Aorta (tissue), 5 donors: ENCODE measurements at regions of chr10 and their contacts with region 1.

Region 1: GRCh38 chr10:87659571-87660483 is at the start of gene PAPSS2:
- DNase-seq: peak; percentile 87 to 89
- ATAC-seq: peak; percentile 78
- H3K4me3 ChIP-seq: peak within 1 kb of the TSS; percentile 40 to 76
- H3K27ac ChIP-seq: no peak within 1 kb of the TSS
- H3K4me1 ChIP-seq: no peaks in the 10 kb centered on the region
- H3K27me3 ChIP-seq: no peaks in the 10 kb centered on the region
- total RNA-seq, gene PAPSS2: 42.9 to 57.2 TPM

Region 2: DNA sequence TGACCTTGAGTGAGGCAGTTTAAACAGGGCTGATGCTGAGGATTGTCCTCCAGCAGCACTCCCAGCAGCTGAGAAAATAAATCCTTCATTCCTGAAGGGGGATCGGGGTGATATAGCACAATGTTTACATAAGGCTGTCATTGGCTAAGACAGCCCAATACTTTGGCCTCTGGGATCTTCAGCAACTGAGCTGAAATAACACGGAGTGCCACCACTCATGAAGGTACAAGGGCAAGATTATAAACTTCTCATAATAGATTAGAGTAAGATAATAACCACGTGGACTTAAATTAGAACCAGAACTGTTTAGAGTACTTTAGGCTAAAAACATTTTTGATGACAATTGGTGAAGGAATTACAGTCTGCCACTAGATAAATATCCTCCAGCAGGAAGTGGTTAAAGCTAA is 70.2 kb before region 1 on chr10:
- intact Hi-C with region 1: no loop called
- DNase-seq: no peak
- ATAC-seq: no peak
- H3K4me3 ChIP-seq: no peak overlapping the region
- H3K27ac ChIP-seq: no peak overlapping the region
- H3K4me1 ChIP-seq: no peaks in the 10 kb centered on the region
- H3K27me3 ChIP-seq: no peaks in the 10 kb centered on the region

Region 3: GRCh38 chr10:87691506-87692070 is 31.8 kb after region 1 on chr10:
- intact Hi-C with region 1: no loop called
- DNase-seq: no peak
- ATAC-seq: no peak
- H3K4me3 ChIP-seq: no peak overlapping the region
- H3K27ac ChIP-seq: no peak overlapping the region
- H3K4me1 ChIP-seq: no peaks in the 10 kb centered on the region
- H3K27me3 ChIP-seq: no peaks in the 10 kb centered on the region

Region 4: DNA sequence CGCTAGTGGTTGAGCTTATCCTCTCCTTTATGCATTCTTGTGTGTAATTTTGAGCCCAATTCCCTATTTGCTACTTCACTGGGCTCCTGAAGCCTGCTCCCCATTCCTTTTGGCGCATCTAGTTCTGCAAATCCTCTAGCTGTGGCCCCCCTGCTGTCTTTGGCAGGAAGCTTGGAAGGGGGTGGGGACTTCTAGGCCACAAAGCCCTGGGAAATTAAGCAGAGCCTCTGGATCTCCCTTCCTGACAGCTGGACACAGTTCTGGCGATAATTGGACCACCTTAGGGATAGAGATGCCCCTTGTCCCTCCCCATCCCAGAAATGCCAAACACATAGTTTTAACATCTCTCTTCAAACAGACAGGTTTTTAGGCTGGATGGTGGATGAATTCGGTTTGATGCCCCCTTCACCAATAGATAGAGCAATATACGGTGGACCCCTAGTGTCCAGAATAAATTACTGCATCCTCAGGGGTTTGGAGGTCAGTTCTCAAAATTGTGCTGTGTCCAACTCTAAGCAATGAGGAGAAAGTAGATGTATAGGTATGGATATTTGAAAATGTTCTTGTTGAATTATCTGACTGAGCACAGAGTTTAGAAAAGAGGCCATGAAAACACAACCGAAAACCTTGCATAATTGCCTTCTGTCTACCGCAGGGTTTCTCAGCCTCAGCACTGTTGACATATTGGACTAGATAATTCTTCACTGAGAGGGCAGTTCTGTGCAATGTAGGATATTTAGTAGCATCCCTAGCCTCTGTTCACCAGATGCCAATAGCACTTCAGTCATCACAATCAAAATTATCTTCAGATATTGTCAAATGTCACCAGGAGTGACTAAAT is 75.4 kb after region 1 on chr10:
- intact Hi-C with region 1: loop called (anchors 2 to 5 kb)
- DNase-seq: no peak
- ATAC-seq: peak; percentile 85
- H3K4me3 ChIP-seq: no peak overlapping the region
- H3K27ac ChIP-seq: no peak overlapping the region
- H3K4me1 ChIP-seq: no peaks in the 10 kb centered on the region
- H3K27me3 ChIP-seq: no peaks in the 10 kb centered on the region

Region 5: DNA sequence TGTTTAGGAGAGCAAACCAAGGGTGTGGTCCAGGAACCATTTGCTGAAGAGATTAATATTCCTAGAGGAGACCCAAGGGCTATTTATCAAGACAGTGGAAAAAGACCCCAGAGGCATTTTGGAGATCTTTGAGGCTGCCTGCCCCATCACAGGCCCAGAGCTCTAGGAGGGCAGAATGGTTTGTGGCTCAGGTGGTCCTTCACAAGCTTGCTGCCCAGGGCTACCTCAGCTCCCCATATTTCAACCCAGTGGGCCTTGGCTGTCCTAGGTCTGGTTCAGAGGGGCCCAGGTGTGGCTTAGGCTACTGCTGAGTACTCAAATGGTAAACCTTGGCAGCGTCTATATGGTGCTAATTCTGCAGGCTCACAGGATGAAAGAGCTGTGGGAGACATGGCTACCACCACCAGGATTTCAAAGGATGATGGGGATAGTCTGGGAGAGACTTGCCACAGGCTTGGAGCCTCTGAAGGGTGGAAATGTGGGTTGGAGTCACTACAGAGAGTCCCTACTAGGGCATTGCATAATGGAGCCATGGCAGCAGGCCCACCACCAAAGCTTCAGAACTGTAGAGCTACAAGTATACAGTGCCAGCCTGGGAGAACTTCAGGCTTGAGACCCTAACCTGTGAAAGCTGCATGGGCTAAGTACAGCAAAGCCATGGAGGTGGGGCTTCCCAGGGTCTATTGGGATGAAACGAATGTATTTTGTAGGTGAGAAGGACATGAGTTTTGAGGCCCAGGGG is 227.9 kb after region 1 on chr10:
- intact Hi-C with region 1: no loop called
- DNase-seq: no peak
- ATAC-seq: no peak
- H3K4me3 ChIP-seq: no peak overlapping the region
- H3K27ac ChIP-seq: no peak overlapping the region
- H3K4me1 ChIP-seq: peaks cover 2 to 4% of the 10 kb centered on the region in 2 donors
- H3K27me3 ChIP-seq: no peaks in the 10 kb centered on the region

Region 6: DNA sequence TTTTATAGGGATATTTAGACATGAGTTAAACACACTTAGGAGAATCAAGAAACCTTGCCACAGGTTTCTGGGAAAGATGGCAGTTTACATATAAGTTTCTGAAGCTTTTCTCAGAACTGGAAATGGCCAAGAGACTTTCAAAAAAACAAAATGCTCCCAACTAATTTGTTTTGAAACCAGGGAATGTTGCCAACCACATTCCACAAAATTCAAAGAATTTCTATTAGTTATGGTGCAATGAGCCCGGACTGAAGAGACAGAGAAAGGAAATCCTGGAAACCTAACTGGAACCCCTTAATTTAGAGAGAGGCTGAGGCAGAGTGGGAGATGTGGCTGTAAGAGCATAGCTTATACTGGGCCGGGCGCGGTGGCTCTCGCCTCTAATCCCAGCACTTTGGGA is 332.1 kb after region 1 on chr10:
- intact Hi-C with region 1: no loop called
- DNase-seq: no peak
- ATAC-seq: no peak
- H3K4me3 ChIP-seq: no peak overlapping the region
- H3K27ac ChIP-seq: no peak overlapping the region
- H3K4me1 ChIP-seq: no peaks in the 10 kb centered on the region
- H3K27me3 ChIP-seq: no peaks in the 10 kb centered on the region